HCT116 (cell line): ENCODE measurements at regions of chr13 and their contacts with region 1.

Region 1: DNA sequence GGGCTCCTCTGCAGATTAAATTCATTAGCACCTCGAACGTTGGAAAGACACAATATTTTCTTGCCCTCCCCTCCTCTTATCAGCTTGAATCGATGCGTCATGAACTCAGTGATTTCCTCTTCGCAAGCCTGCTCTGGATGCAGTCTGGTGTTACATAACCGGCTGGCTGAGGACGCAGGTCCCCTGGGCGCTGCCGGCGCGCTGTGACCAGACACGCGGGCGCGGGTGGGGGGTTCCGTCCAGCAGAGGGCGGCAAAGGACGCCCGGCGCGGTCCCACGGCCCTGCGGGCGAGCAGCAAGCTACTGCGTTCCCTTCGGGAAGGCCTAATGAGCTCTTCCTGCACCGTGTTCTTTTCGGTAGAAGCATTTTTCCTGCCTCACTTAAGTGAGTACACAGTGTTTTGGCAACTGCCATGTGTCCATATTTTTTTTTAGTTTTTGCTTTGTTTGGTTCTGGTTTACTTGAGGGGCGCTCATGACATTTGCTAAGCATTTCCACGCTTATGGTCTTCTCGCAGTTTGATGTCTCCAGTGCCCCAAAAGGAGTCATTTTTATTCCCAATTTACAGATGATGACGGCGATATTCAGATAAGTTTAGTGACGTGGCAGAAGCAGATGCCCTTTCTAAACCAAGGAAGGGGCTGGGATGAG is 112.2 kb upstream of the MBNL2 start:
- DNase-seq: peak; percentile 64
- ATAC-seq: peak; percentile 98
- H3K4me3 ChIP-seq: peak overlapping the region in 1 of 2 experiments; percentile 32; a peak in 3 of 4 replicates
- H3K27ac ChIP-seq: no peak overlapping the region
- H3K4me1 ChIP-seq: peaks cover 14 to 25% of the 10 kb centered on the region in 2 experiments
- H3K27me3 ChIP-seq: no peaks in the 10 kb centered on the region
- CTCF ChIP-seq: peak; percentile 75 to 95 (median 90)
- POLR2A ChIP-seq: no peak
- RAD21 ChIP-seq: peak; percentile 100

Region 2: DNA sequence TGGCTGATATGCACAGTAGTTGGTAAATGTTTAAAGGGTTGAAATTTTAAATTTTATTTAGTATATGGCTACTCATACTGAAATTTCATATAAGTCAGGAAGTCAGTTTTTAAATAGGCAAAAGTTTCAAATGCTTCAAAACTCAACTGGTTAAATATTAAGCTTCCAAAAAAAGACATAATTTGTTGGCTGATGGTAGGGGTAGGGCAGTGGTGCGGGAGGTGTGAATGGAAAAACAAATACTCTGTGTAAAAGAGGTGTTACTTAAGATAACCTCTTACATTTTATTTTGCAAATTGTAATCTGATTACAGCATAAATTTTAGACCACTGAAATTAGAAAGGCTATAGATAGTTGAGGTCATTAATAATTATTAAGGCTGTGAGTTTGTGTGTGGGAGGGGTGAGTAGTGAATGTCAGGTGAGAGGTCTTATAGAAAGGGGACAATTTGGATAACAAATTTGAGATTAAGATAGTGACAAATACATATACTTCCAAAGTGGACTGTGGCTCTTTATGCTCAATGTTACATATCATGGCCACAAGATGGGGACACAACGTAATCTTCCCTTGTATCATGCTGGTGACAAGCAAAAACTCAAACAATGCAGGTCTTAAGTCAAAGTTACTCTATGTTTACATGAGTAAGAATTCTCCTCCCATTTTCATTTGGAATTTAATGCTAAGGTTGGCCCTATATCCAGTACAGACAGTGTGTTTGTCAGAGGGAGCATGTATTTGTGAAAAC is 79.1 kb before region 1 on chr13:
- CTCF ChIA-PET with region 1: interaction called, 3 read pairs
- POLR2A ChIA-PET with region 1: no interaction called
- RAD21 ChIA-PET with region 1: no interaction called
- intact Hi-C with region 1: loop called (anchors 2 kb)
- DNase-seq: peak; percentile 46
- ATAC-seq: peak; percentile 85
- H3K4me3 ChIP-seq: no peak overlapping the region
- H3K27ac ChIP-seq: no peak overlapping the region
- H3K4me1 ChIP-seq: peaks cover 0 to 2% of the 10 kb centered on the region in 2 experiments; a peak in 1 of 4 replicates
- H3K27me3 ChIP-seq: no peaks in the 10 kb centered on the region
- CTCF ChIP-seq: peak; percentile 52 to 56 (median 56); a peak in 5 of 6 replicates
- POLR2A ChIP-seq: no peak
- RAD21 ChIP-seq: peak; percentile 69

Region 3: DNA sequence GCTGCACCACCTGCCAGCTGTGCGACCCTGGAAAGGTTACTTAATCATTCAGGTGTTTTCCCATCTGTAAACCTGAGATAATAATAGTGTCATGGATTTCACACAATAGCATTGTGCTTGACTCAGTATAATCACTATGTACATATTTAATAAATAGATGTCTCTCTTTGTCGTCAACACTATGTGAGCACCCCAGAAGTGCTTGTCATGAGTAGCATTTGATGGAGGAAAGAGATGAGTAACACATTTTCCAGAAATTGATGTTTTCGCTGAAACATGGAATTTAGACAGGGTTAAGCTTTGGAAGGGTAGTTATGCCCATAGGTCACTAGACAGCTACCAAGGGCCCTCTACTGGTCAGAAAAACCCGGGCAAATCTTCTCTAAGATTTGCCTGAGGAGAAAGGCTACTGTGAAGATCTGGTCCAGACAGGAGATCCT is 102.7 kb after region 1 on chr13:
- CTCF ChIA-PET with region 1: interaction called, 10 read pairs
- POLR2A ChIA-PET with region 1: no interaction called
- RAD21 ChIA-PET with region 1: interaction called, 7 read pairs
- intact Hi-C with region 1: loop called (anchors 1 kb)
- DNase-seq: no peak
- ATAC-seq: peak; percentile 95
- H3K4me3 ChIP-seq: no peak overlapping the region
- H3K27ac ChIP-seq: no peak overlapping the region
- H3K4me1 ChIP-seq: peaks cover 5 to 12% of the 10 kb centered on the region in 2 experiments; a peak in 2 of 4 replicates
- H3K27me3 ChIP-seq: no peaks in the 10 kb centered on the region
- CTCF ChIP-seq: peak; percentile 58 to 79 (median 76); a peak in 5 of 6 replicates
- POLR2A ChIP-seq: no peak
- RAD21 ChIP-seq: peak; percentile 76

Region 4: DNA sequence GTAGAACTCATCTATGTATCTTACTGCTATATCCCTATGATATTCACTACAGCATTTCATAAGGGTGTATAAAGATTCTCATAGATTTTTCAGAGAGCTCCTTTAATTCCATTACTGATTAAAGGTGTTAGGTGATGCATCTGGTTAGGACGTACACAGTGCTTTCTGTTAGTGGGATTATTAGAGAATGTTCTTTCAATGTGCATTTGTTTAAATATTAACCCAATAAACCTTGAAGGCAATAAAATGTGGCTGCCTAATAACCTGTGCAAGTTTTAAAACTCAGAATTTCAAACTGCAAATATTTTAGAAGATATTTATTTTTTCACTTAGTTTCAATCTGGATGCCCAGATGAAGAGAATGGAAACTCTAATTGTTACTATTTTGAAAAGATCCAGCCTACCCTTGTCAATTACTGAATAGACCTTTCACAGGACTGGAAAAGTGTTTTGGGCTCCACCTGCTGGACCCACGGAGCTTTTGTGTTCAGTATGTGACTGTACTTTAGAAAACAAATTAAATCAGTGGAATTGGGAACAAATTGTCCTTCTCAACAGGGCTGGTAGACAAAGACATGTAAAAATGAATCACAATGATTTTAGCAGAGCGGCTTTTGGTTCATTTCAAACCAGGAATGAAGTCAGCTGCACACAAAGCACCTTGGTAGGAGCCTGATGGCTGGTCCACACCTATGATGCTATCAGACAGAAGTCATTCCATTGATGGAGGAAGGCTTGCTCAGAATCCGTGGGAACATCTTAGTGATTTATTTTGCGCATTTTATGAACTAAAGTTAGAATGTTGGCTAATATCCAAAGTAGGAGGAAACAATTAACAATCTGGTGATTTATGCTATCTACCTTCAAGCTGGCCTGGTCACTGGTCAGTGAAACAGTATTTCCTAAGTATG is 234.6 kb after region 1 on chr13:
- CTCF ChIA-PET with region 1: interaction called, 27 read pairs
- POLR2A ChIA-PET with region 1: no interaction called
- RAD21 ChIA-PET with region 1: interaction called, 3 to 10 read pairs
- intact Hi-C with region 1: loop called (anchors 1 kb)
- DNase-seq: peak; percentile 49
- ATAC-seq: peak; percentile 95
- H3K4me3 ChIP-seq: no peak overlapping the region
- H3K27ac ChIP-seq: peak overlapping the region; percentile 54; the same call in 1 of the 2 replicates
- H3K4me1 ChIP-seq: peaks cover 26 to 39% of the 10 kb centered on the region in 2 experiments
- H3K27me3 ChIP-seq: no peaks in the 10 kb centered on the region
- CTCF ChIP-seq: peak; percentile 72 to 79 (median 76)
- POLR2A ChIP-seq: no peak
- RAD21 ChIP-seq: peak; percentile 86

Region 5: DNA sequence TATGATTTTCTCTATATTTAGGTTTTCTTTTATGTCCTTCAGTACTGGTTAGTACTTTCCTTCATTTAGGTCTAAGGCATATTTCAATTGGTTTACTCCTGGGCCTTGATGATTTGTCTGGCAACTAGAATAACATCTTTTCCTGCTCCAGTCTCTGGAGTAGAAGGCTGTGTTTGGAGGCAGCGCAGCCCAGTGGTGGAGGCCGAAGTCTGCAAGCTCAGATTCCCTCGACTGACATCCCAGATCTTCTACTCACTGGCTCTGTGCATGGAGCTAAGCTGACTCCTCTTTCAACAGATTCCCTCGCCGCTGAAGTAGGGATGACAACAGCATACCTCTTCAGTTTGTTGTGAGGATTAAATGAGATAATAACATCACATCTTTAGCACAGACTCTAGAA is 465.0 kb after region 1 on chr13:
- CTCF ChIA-PET with region 1: interaction called, 3 read pairs
- POLR2A ChIA-PET with region 1: no interaction called
- RAD21 ChIA-PET with region 1: no interaction called
- intact Hi-C with region 1: loop called (anchors 2 kb)
- DNase-seq: peak; percentile 31
- ATAC-seq: peak; percentile 91
- H3K4me3 ChIP-seq: no peak overlapping the region
- H3K27ac ChIP-seq: no peak overlapping the region
- H3K4me1 ChIP-seq: no peaks in the 10 kb centered on the region
- H3K27me3 ChIP-seq: no peaks in the 10 kb centered on the region
- CTCF ChIP-seq: peak; percentile 34 to 72 (median 62); a peak in 5 of 6 replicates
- POLR2A ChIP-seq: no peak
- RAD21 ChIP-seq: peak; percentile 77